ENCODE measurements at regions of chr17 and their contacts with region 1.

Region 1: GRCh38 chr17:43576563-43577229 is 30.6 kb upstream of the ETV4 start:
- DNase-seq: peak; percentile 75
- H3K4me3 ChIP-seq: no peak overlapping the region
- H3K27ac ChIP-seq: no peak overlapping the region
- H3K4me1 ChIP-seq: peaks cover 6% of the 10 kb centered on the region
- H3K27me3 ChIP-seq: no peaks in the 10 kb centered on the region
- CTCF ChIP-seq: peak; percentile 91 to 93 (median 92)
- POLR2A ChIP-seq: no peak

Region 2: DNA sequence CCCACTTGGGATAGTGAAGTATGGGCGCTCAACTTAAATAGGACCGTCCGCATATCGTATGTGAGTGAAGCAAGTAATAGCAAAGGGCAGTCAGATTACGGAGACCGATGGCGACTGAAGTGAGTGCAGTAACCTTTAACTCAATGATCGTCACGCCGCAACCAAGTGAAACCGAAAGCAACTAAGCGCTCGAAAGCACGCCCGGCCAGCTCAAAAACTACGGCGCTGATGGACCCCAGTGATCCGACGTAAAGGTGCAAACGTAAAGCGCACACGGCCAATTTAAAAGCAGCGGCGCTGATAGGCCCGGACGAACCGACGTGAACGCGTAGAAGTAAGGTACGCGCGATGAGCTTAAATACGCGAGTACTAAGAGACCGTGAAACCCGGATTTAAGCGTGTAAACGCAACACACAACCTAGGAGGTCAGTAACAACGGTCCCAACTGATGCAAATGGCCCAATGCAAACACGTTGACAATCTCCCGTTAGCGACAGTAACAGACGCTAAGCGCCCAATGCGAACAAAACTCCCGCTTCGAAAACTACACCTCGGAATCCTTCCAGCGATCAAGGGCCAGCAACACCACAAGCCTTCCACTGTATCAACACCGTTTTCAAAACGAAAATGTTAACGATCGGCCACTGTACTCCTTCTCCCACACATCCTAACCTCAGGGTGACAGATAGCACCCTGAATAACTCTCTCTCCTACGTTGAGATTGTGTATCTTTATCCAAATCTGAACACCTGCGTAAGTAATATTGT is 215.8 kb before region 1 on chr17:
- intact Hi-C with region 1: no loop called
- DNase-seq: peak; percentile 92
- H3K4me3 ChIP-seq: peak overlapping the region; percentile 52 to 67
- H3K27ac ChIP-seq: peak overlapping the region; percentile 89 to 97
- H3K4me1 ChIP-seq: peaks cover 12% of the 10 kb centered on the region
- H3K27me3 ChIP-seq: no peaks in the 10 kb centered on the region
- CTCF ChIP-seq: peak in 2 of 3 experiments; percentile 7 to 18
- POLR2A ChIP-seq: peak; percentile 99

Region 3: DNA sequence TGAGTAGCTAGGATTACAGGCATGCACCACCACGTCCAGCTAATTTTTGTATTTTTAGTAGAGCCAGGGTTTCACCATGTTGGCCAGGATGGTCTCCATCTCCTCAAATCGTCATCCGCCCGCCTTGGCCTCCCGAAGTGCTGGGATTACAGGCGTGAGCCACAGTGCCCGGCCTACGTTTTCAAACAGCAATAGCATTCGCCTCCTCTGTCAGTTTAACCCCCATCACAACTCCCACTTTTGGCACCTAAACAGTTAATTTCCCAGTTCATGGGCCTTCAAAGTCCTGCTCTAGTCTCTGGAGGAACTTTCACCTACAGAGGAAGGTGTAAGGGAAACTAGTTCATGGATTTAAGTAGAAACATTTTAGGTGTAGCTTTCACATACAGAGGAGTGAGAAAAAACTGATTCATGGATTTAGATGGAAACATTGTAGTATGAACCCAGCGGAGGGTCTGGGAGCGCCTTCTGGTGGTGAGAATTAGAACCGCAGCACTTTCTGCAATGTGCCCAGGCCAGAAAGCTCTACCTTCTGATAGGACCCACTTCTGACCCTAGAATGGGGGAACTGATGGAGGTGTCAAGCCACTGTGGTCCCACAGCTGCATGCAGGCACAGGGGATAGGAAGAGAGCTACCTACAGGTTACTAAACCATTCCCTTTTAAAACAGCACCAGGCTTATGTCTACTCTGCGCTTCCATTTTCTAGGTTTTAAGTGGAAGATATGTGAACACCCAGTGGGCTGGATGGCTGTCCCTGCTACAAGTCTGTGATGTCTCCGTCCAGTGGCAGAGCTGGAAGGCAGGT is 97.0 kb after region 1 on chr17:
- intact Hi-C with region 1: loop called (anchors 5 kb)
- DNase-seq: peak; percentile 89
- H3K4me3 ChIP-seq: no peak overlapping the region
- H3K27ac ChIP-seq: no peak overlapping the region
- H3K4me1 ChIP-seq: peaks cover 10% of the 10 kb centered on the region
- H3K27me3 ChIP-seq: no peaks in the 10 kb centered on the region
- CTCF ChIP-seq: peak; percentile 89 to 97 (median 96)
- POLR2A ChIP-seq: no peak

Measured in testis (tissue), 5 donors.